GM12878 (cell line): ENCODE measurements at regions of chr3 and their contacts with region 1.

Region 1: GRCh38 chr3:141913150-141913811 is 36.8 kb downstream of the ATP1B3 start:
- DNase-seq: peak; percentile 19
- ATAC-seq: peak; percentile 89
- H3K4me3 ChIP-seq: no peak overlapping the region
- H3K27ac ChIP-seq: no peak overlapping the region
- H3K4me1 ChIP-seq: no peaks in the 10 kb centered on the region
- H3K27me3 ChIP-seq: no peaks in the 10 kb centered on the region
- CTCF ChIP-seq: peak; percentile 60 to 74 (median 62)
- EP300 ChIP-seq: no peak
- POLR2A ChIP-seq: no peak
- RAD21 ChIP-seq: peak; percentile 78

Region 2: GRCh38 chr3:139994891-139995290 is 1918.4 kb before region 1 on chr3:
- CTCF ChIA-PET with region 1: no interaction called
- POLR2A ChIA-PET with region 1: no interaction called
- RAD21 ChIA-PET with region 1: no interaction called
- SMC1A ChIA-PET with region 1: no interaction called
- in situ Hi-C with region 1: no loop called
- intact Hi-C with region 1: no loop called
- DNase-seq: no peak
- ATAC-seq: no peak
- H3K4me3 ChIP-seq: no peak overlapping the region
- H3K27ac ChIP-seq: no peak overlapping the region
- H3K4me1 ChIP-seq: no peaks in the 10 kb centered on the region
- H3K27me3 ChIP-seq: no peaks in the 10 kb centered on the region; a peak in 1 of 4 replicates
- CTCF ChIP-seq: no peak
- EP300 ChIP-seq: no peak
- POLR2A ChIP-seq: no peak
- RAD21 ChIP-seq: no peak

Region 3: GRCh38 chr3:141460097-141460704 is 453.1 kb before region 1 on chr3:
- CTCF ChIA-PET with region 1: interaction called, 13 read pairs
- POLR2A ChIA-PET with region 1: no interaction called
- RAD21 ChIA-PET with region 1: no interaction called
- SMC1A ChIA-PET with region 1: no interaction called
- in situ Hi-C with region 1: no loop called
- intact Hi-C with region 1: no loop called
- DNase-seq: no peak
- ATAC-seq: peak; percentile 100
- H3K4me3 ChIP-seq: no peak overlapping the region
- H3K27ac ChIP-seq: no peak overlapping the region
- H3K4me1 ChIP-seq: peaks cover 3% of the 10 kb centered on the region; the same call in 1 of the 2 replicates
- H3K27me3 ChIP-seq: no peaks in the 10 kb centered on the region
- CTCF ChIP-seq: peak; percentile 79 to 96 (median 87)
- EP300 ChIP-seq: no peak
- POLR2A ChIP-seq: no peak
- RAD21 ChIP-seq: peak; percentile 89

Region 4: GRCh38 chr3:141575879-141576743 is 337.2 kb before region 1 on chr3:
- CTCF ChIA-PET with region 1: interaction called, 10 read pairs
- POLR2A ChIA-PET with region 1: no interaction called
- RAD21 ChIA-PET with region 1: no interaction called
- SMC1A ChIA-PET with region 1: interaction called, 7 read pairs
- in situ Hi-C with region 1: no loop called
- intact Hi-C with region 1: loop called (anchors 10 kb)
- DNase-seq: no peak
- ATAC-seq: peak; percentile 93
- H3K4me3 ChIP-seq: no peak overlapping the region
- H3K27ac ChIP-seq: no peak overlapping the region
- H3K4me1 ChIP-seq: peaks cover 5% of the 10 kb centered on the region; the same call in 1 of the 2 replicates
- H3K27me3 ChIP-seq: no peaks in the 10 kb centered on the region
- CTCF ChIP-seq: peak; percentile 39 to 47 (median 42); a peak in 4 of 6 replicates
- EP300 ChIP-seq: no peak
- POLR2A ChIP-seq: no peak
- RAD21 ChIP-seq: peak; percentile 53

Region 5: GRCh38 chr3:141738022-141738890 is 175.0 kb before region 1 on chr3 and contains the start of gene RNF7:
- CTCF ChIA-PET with region 1: interaction called, 15 read pairs
- POLR2A ChIA-PET with region 1: no interaction called
- RAD21 ChIA-PET with region 1: interaction called, 5 read pairs
- SMC1A ChIA-PET with region 1: interaction called, 5 read pairs
- in situ Hi-C with region 1: no loop called
- intact Hi-C with region 1: loop called (anchors 1 kb)
- DNase-seq: peak; percentile 83
- ATAC-seq: peak; percentile 95
- H3K4me3 ChIP-seq: peak within 1 kb of the TSS; percentile 91
- H3K27ac ChIP-seq: peak within 1 kb of the TSS; percentile 87
- H3K4me1 ChIP-seq: 0 out of 2 replicates have a peak, but pooled peaks cover 5% of the 10 kb centered on the region
- H3K27me3 ChIP-seq: no peaks in the 10 kb centered on the region
- CTCF ChIP-seq: peak; percentile 79 to 98 (median 94); a peak in 5 of 6 replicates
- EP300 ChIP-seq: no peak
- POLR2A ChIP-seq: peak; percentile 97
- RAD21 ChIP-seq: peak; percentile 61
- polyA plus RNA-seq, gene RNF7: 83.8 to 98.6 TPM

Region 6: DNA sequence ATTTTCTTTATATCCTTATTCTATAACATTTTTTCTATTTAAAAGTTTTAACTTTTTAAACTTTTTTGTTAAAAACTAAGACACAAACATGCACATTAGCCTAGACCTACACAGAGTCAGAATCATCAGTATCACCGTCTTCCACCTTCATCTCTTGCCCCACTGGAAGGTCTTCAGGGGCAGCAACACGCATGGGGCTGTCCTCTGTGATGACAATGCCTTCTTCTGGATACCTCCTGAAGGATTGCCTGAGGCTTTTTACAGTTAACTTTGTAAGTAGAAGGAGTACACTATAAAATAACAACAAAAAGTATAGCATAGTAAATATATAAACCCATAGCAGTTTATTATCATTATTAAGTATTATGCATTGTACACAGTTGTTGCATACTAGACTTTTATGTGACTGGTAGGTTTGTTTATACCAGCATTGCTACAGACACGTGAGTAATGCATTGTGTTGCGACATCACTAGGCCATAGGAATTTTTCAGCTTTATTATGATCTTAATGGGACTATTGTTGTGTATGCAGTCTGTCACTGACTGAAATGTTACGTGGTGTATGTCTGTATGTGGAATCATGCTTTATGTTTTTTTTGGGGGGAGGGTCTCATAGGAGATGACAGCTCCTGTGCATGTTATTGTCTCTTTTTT is 18.6 kb before region 1 on chr3:
- CTCF ChIA-PET with region 1: interaction called, 15 read pairs
- POLR2A ChIA-PET with region 1: no interaction called
- RAD21 ChIA-PET with region 1: no interaction called
- SMC1A ChIA-PET with region 1: no interaction called
- in situ Hi-C with region 1: no loop called
- intact Hi-C with region 1: no loop called
- DNase-seq: no peak
- ATAC-seq: no peak
- H3K4me3 ChIP-seq: no peak overlapping the region
- H3K27ac ChIP-seq: no peak overlapping the region
- H3K4me1 ChIP-seq: no peaks in the 10 kb centered on the region
- H3K27me3 ChIP-seq: no peaks in the 10 kb centered on the region
- CTCF ChIP-seq: no peak
- EP300 ChIP-seq: no peak
- POLR2A ChIP-seq: no peak
- RAD21 ChIP-seq: no peak